ENCODE measurements at regions of chr12 and their contacts with region 1.

Region 1: GRCh38 chr12:55715833-55716581 is at the start of gene BLOC1S1:
- DNase-seq: peak; percentile 73
- ATAC-seq: peak; percentile 95
- H3K4me3 ChIP-seq: peak within 1 kb of the TSS; percentile 81
- H3K27ac ChIP-seq: peak within 1 kb of the TSS; percentile 95
- H3K4me1 ChIP-seq: peaks cover 20% of the 10 kb centered on the region
- H3K27me3 ChIP-seq: no peaks in the 10 kb centered on the region
- CTCF ChIP-seq: no peak
- EP300 ChIP-seq: no peak
- POLR2A ChIP-seq: peak; percentile 74
- RAD21 ChIP-seq: 0 out of 2 replicates have a peak, but pooled peaks have one; percentile 26
- polyA plus RNA-seq, gene BLOC1S1: 264 to 285 TPM

Region 2: GRCh38 chr12:55642669-55643068 is 73.3 kb before region 1 on chr12:
- CTCF ChIA-PET with region 1: interaction called, 10 read pairs
- POLR2A ChIA-PET with region 1: no interaction called
- RAD21 ChIA-PET with region 1: interaction called, 3 read pairs
- SMC1A ChIA-PET with region 1: interaction called, 5 read pairs
- in situ Hi-C with region 1: no loop called
- intact Hi-C with region 1: no loop called
- DNase-seq: no peak
- ATAC-seq: no peak
- H3K4me3 ChIP-seq: no peak overlapping the region
- H3K27ac ChIP-seq: no peak overlapping the region
- H3K4me1 ChIP-seq: peaks cover 20% of the 10 kb centered on the region
- H3K27me3 ChIP-seq: no peaks in the 10 kb centered on the region
- CTCF ChIP-seq: no peak
- EP300 ChIP-seq: no peak
- POLR2A ChIP-seq: no peak
- RAD21 ChIP-seq: no peak

Region 3: DNA sequence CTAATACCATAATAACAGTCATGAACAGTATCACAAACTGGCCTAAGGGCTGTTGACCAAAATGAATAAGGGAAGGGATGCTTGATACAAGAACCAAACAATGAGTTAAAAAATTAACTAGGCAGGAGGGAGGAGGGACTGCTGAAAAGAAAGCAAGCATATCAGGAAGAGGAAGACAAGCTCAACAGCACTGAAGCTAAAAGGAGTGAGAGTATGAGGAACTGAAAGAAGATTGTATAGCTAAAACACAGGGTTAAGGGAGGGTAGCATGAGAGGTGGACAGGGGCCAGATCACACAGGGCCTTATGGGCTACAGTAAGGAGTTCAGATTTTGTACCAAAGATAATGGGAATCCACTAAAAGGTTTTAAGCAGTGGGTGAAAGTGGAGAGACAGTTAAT is 42.4 kb before region 1 on chr12:
- CTCF ChIA-PET with region 1: interaction called, 5 read pairs
- POLR2A ChIA-PET with region 1: interaction called, 3 read pairs
- RAD21 ChIA-PET with region 1: interaction called, 10 read pairs
- SMC1A ChIA-PET with region 1: interaction called, 10 read pairs
- in situ Hi-C with region 1: no loop called
- intact Hi-C with region 1: no loop called
- DNase-seq: peak; percentile 76
- ATAC-seq: peak; percentile 100
- H3K4me3 ChIP-seq: 0 out of 2 replicates have a peak overlapping the region, but pooled peaks have one; percentile 16
- H3K27ac ChIP-seq: peak overlapping the region; percentile 62; the same call in 1 of the 2 replicates
- H3K4me1 ChIP-seq: peaks cover 10% of the 10 kb centered on the region
- H3K27me3 ChIP-seq: no peaks in the 10 kb centered on the region
- CTCF ChIP-seq: no peak
- EP300 ChIP-seq: no peak
- POLR2A ChIP-seq: peak; percentile 43; the same call in 1 of the 2 replicates
- RAD21 ChIP-seq: no peak

Region 4: GRCh38 chr12:55692631-55693322 is 23.2 kb before region 1 on chr12:
- CTCF ChIA-PET with region 1: no interaction called
- POLR2A ChIA-PET with region 1: no interaction called
- RAD21 ChIA-PET with region 1: no interaction called
- SMC1A ChIA-PET with region 1: no interaction called
- in situ Hi-C with region 1: no loop called
- intact Hi-C with region 1: no loop called
- DNase-seq: no peak
- ATAC-seq: no peak
- H3K4me3 ChIP-seq: no peak overlapping the region
- H3K27ac ChIP-seq: no peak overlapping the region
- H3K4me1 ChIP-seq: peaks cover 3% of the 10 kb centered on the region
- H3K27me3 ChIP-seq: no peaks in the 10 kb centered on the region; a peak in 1 of 4 replicates
- CTCF ChIP-seq: no peak
- EP300 ChIP-seq: no peak
- POLR2A ChIP-seq: no peak
- RAD21 ChIP-seq: no peak

Region 5: GRCh38 chr12:55728939-55729823 is 13.2 kb after region 1 on chr12 and contains the start of gene CD63:
- CTCF ChIA-PET with region 1: interaction called, 205 read pairs
- POLR2A ChIA-PET with region 1: interaction called, 39 read pairs
- RAD21 ChIA-PET with region 1: interaction called, 113 read pairs
- SMC1A ChIA-PET with region 1: interaction called, 16 read pairs
- in situ Hi-C with region 1: no loop called
- intact Hi-C with region 1: no loop called
- DNase-seq: no peak
- ATAC-seq: peak; percentile 79
- H3K4me3 ChIP-seq: peak within 1 kb of the TSS; percentile 76
- H3K27ac ChIP-seq: peak within 1 kb of the TSS; percentile 68
- H3K4me1 ChIP-seq: peaks cover 11% of the 10 kb centered on the region
- H3K27me3 ChIP-seq: no peaks in the 10 kb centered on the region
- CTCF ChIP-seq: no peak; a peak in 1 of 6 replicates
- EP300 ChIP-seq: peak in 1 of 2 experiments; percentile 46; a peak in 1 of 4 replicates
- POLR2A ChIP-seq: peak; percentile 77
- RAD21 ChIP-seq: no peak
- polyA plus RNA-seq, gene CD63: 194 to 220 TPM

Measured in GM12878 (cell line).